ENCODE measurements at regions of chrX and their contacts with region 1.

Region 1: GRCh38 chrX:111445486-111445885 is 33.5 kb upstream of the DCX start:
- DNase-seq: peak; percentile 15
- ATAC-seq: peak; percentile 36; the same call in 1 of the 2 replicates
- H3K4me3 ChIP-seq: no peak overlapping the region
- H3K27ac ChIP-seq: no peak overlapping the region
- H3K4me1 ChIP-seq: no peaks in the 10 kb centered on the region
- H3K27me3 ChIP-seq: no peaks in the 10 kb centered on the region
- CTCF ChIP-seq: peak; percentile 13 to 47 (median 23); a peak in 3 of 6 replicates
- POLR2A ChIP-seq: no peak
- RAD21 ChIP-seq: peak; percentile 39

Region 2: DNA sequence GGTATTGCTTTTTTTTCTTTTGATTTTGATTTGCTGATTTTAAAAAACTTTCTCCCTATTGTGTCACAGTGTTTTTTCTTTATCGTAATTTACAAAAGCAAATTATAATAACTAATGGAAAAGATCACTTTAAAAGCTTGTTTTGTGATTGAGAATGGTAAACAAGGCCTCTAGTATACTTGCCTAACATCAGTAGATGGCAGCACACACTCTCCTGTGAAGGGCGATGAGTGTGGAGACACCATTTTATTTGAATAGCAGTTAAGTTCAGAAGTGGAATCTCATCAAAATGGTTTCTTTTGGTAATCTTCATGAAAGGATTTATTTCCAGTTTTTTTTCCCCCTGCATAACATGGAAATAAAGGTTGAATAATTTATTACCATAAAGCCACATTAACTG is 277.2 kb before region 1 on chrX:
- CTCF ChIA-PET with region 1: interaction called, 6 read pairs
- POLR2A ChIA-PET with region 1: no interaction called
- RAD21 ChIA-PET with region 1: no interaction called
- intact Hi-C with region 1: loop called (anchors 2 kb)
- DNase-seq: no peak
- ATAC-seq: no peak
- H3K4me3 ChIP-seq: no peak overlapping the region
- H3K27ac ChIP-seq: no peak overlapping the region
- H3K4me1 ChIP-seq: no peaks in the 10 kb centered on the region
- H3K27me3 ChIP-seq: no peaks in the 10 kb centered on the region
- CTCF ChIP-seq: peak; percentile 12 to 29 (median 14); a peak in 2 of 6 replicates
- POLR2A ChIP-seq: no peak
- RAD21 ChIP-seq: peak; percentile 36